A673 (cell line): ENCODE measurements at regions of chr14 and their contacts with region 1.

Region 1: GRCh38 chr14:88613552-88614010 is 50.7 kb downstream of the ZC3H14 start:
- DNase-seq: no peak
- H3K4me3 ChIP-seq: no peak overlapping the region
- H3K27ac ChIP-seq: no peak overlapping the region
- H3K4me1 ChIP-seq: no peaks in the 10 kb centered on the region
- H3K27me3 ChIP-seq: no peaks in the 10 kb centered on the region
- CTCF ChIP-seq: no peak

Region 2: GRCh38 chr14:88576222-88576621 is 37.4 kb before region 1 on chr14:
- CTCF ChIA-PET with region 1: no interaction called
- POLR2A ChIA-PET with region 1: no interaction called
- intact Hi-C with region 1: loop called (anchors 5 kb)
- DNase-seq: no peak
- H3K4me3 ChIP-seq: no peak overlapping the region
- H3K27ac ChIP-seq: no peak overlapping the region
- H3K4me1 ChIP-seq: no peaks in the 10 kb centered on the region
- H3K27me3 ChIP-seq: no peaks in the 10 kb centered on the region
- CTCF ChIP-seq: no peak

Region 3: DNA sequence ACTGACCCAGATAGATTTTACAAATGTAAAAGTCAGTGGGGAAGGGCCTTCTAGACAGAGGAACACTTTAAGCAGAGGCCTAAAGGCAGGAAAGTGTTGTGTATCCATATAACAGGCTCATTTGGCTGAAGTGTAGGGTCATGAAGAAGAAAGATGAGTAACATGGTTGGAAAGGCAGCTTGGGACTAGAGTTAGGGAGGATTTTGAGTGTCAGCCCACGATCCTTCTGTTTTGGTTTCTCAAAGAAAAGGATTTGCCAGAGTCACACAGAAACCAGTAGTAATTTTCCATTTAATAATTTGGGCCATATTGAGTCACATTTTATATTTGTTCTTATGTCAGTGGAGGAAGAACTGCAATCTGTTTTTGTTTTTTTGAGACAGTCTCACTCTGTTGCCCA is 25.6 kb after region 1 on chr14:
- CTCF ChIA-PET with region 1: no interaction called
- POLR2A ChIA-PET with region 1: no interaction called
- intact Hi-C with region 1: no loop called
- DNase-seq: no peak
- H3K4me3 ChIP-seq: no peak overlapping the region
- H3K27ac ChIP-seq: no peak overlapping the region
- H3K4me1 ChIP-seq: no peaks in the 10 kb centered on the region
- H3K27me3 ChIP-seq: no peaks in the 10 kb centered on the region
- CTCF ChIP-seq: no peak